Mammary epithelial cell (primary cell): ENCODE measurements at regions of chr1 and their contacts with region 1.

Region 1: DNA sequence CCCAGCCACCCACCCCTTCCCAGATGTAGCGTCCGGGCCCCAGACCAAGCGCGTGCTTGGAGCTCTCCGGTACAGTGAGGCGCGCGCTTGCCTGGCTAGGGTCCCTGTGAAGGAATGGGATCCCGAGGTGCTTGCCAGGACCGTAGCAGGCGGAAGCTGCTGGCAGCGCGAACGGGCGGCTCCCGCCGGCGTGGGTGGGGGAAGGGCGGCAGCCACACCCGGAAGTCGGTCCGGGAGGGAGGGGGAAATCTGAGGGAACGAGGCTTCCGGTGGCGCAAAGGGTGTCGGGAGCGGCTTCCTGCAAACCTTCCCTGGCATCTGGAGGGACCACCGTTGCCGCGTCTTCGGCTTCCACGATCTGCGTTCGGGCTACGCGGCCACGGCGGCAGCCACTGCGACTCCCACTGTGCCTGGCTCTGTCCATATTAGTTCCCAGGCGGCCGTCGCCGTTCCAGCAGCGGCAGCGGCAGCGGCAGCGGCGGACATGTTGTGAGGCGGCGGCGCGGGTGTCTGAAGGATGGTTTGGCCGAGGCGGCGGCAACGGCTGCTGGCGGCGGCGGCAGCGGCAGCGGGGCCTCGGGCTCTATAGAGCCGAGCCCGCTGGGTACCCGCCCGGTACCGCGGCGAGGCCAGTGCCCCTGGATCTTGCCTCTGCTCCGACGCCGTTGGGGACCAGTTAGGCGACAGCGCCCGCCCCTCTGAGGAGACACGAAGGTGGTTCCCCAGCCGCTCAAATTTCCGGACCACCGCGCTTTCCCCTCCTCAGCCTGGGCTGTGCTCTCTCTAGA is at the start of gene DR1:
- DNase-seq: peak; percentile 92
- H3K4me3 ChIP-seq: peak within 1 kb of the TSS; percentile 87 to 97 (median 96)
- H3K27ac ChIP-seq: peak within 1 kb of the TSS; percentile 92
- H3K4me1 ChIP-seq: peaks cover 23% of the 10 kb centered on the region
- H3K27me3 ChIP-seq: no peaks in the 10 kb centered on the region
- CTCF ChIP-seq: no peak
- total RNA-seq, gene DR1: 35.8 to 79.2 TPM

Region 2: DNA sequence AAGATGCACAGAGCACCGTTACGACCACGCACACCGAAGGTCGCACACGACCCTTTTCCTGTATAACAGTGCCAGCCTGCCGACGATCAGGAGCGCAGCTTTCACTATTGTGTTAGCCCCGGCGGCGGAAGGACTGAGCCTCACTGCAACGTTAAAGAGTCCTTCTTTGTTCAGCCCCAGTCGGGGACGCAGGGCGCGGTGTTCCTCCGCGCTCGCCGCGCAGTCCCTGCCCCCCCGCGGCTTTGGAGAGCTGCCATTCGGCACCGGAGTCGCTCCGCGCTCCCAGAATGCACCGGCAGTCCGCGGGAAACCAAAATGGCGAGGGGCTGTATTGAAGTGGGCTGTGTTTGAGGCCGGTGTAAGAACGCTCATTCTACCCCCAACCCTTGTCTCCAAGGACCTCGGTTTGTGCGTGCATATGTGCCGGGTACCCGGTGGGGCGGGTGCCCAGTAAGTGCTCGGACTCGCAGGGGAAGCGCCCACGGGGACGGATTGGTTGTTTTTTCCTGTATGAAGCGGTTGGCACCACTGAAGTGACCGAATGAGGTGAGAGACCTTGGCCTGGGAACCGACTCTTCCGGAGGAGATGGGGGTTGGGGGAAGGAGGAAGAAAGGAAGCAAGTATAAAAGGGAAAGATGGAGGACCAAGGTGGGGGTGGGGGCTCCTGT is 266.7 kb before region 1 on chr1 and contains the start of gene MTF2:
- CTCF ChIA-PET with region 1: no interaction called
- dilution Hi-C with region 1: no loop called
- in situ Hi-C with region 1: no loop called
- intact Hi-C with region 1: loop called (anchors 5 kb)
- DNase-seq: peak; percentile 94
- H3K4me3 ChIP-seq: peak within 1 kb of the TSS; percentile 67 to 99 (median 83)
- H3K27ac ChIP-seq: peak within 1 kb of the TSS; percentile 79
- H3K4me1 ChIP-seq: peaks cover 22% of the 10 kb centered on the region
- H3K27me3 ChIP-seq: no peaks in the 10 kb centered on the region
- CTCF ChIP-seq: no peak
- total RNA-seq, gene MTF2: 23.5 to 27.5 TPM

Region 3: GRCh38 chr1:93179886-93180722 is 165.7 kb before region 1 on chr1 and contains the start of gene TMED5:
- CTCF ChIA-PET with region 1: interaction called, 3 read pairs
- dilution Hi-C with region 1: no loop called
- in situ Hi-C with region 1: no loop called
- intact Hi-C with region 1: loop called (anchors 2 kb)
- DNase-seq: peak; percentile 99
- H3K4me3 ChIP-seq: peak within 1 kb of the TSS; percentile 85 to 100 (median 98)
- H3K27ac ChIP-seq: peak within 1 kb of the TSS; percentile 94
- H3K4me1 ChIP-seq: peaks cover 14% of the 10 kb centered on the region
- H3K27me3 ChIP-seq: no peaks in the 10 kb centered on the region
- CTCF ChIP-seq: peak in 1 of 2 donors; percentile 18
- total RNA-seq, gene TMED5: 50.5 to 61.5 TPM

Region 4: DNA sequence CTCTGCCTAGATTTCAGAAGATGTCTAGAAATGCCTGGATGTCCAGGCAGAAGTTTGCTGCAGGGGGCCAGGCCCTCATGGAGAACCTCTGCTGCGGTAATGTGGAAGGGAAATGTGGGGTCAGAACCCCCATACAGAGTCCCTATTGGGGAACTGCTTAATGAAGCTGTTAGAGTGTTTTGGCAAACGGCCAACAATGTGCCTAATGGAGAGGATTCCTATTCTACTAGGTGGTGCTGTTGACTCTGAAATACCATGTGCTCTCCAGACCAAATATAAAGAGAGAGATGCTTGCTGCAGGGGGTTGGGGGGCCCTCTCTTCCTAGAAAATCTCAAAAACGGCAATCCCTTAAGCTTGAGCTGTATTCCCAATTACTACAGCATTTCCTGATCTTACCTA is 57.3 kb before region 1 on chr1:
- CTCF ChIA-PET with region 1: no interaction called
- dilution Hi-C with region 1: no loop called
- in situ Hi-C with region 1: no loop called
- intact Hi-C with region 1: no loop called
- DNase-seq: no peak
- H3K4me3 ChIP-seq: no peak overlapping the region
- H3K27ac ChIP-seq: no peak overlapping the region
- H3K4me1 ChIP-seq: no peaks in the 10 kb centered on the region
- H3K27me3 ChIP-seq: no peaks in the 10 kb centered on the region
- CTCF ChIP-seq: no peak

Region 5: GRCh38 chr1:93304716-93305138 is 41.1 kb before region 1 on chr1:
- CTCF ChIA-PET with region 1: interaction called, 5 read pairs
- dilution Hi-C with region 1: no loop called
- in situ Hi-C with region 1: loop called in 1 of 2 experiments (anchors 5 kb)
- intact Hi-C with region 1: loop called (anchors 1 kb)
- DNase-seq: peak; percentile 49
- H3K4me3 ChIP-seq: no peak overlapping the region
- H3K27ac ChIP-seq: no peak overlapping the region
- H3K4me1 ChIP-seq: no peaks in the 10 kb centered on the region
- H3K27me3 ChIP-seq: no peaks in the 10 kb centered on the region
- CTCF ChIP-seq: peak; percentile 83 to 93

Region 6: GRCh38 chr1:93324486-93325464 is 21.1 kb before region 1 on chr1:
- CTCF ChIA-PET with region 1: no interaction called
- dilution Hi-C with region 1: no loop called
- in situ Hi-C with region 1: no loop called
- intact Hi-C with region 1: loop called (anchors 1 kb)
- DNase-seq: peak; percentile 88
- H3K4me3 ChIP-seq: peak overlapping the region; percentile 1 to 34 (median 31)
- H3K27ac ChIP-seq: peak overlapping the region; percentile 86
- H3K4me1 ChIP-seq: peaks cover 27% of the 10 kb centered on the region
- H3K27me3 ChIP-seq: no peaks in the 10 kb centered on the region
- CTCF ChIP-seq: no peak

Region 7: DNA sequence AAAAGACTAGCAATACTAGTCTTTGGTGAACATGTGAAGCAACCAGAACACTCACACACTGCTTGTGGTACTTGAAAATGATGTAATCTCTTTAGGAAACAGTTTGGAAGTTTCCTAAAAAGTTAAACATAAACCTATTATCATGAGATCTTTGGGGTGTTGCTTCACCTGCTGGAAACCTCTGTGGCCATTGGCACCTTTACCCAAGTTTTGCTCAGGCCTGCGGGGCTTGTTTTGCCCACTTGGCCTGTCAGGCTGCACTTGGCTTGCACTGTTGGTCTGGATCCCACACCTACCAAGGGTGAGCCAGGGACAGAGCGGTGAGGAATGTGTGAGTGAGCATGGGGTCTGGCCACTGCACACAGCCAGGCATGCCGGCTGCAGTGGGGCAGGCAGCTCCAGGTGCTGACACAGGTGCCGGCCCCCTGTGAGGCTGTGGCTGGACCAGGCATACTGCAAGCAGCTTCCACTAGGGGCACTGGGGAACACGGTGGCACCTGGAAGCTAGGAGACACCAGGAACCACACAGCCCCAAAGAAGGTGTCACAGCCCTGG is 87.7 kb after region 1 on chr1:
- CTCF ChIA-PET with region 1: no interaction called
- dilution Hi-C with region 1: no loop called
- in situ Hi-C with region 1: no loop called
- intact Hi-C with region 1: no loop called
- DNase-seq: peak; percentile 10
- H3K4me3 ChIP-seq: no peak overlapping the region
- H3K27ac ChIP-seq: no peak overlapping the region
- H3K4me1 ChIP-seq: no peaks in the 10 kb centered on the region
- H3K27me3 ChIP-seq: no peaks in the 10 kb centered on the region
- CTCF ChIP-seq: peak; percentile 23 to 62

Region 8: GRCh38 chr1:93542398-93542797 is 196.6 kb after region 1 on chr1:
- CTCF ChIA-PET with region 1: interaction called, 10 read pairs
- dilution Hi-C with region 1: no loop called
- in situ Hi-C with region 1: no loop called
- intact Hi-C with region 1: no loop called
- DNase-seq: no peak
- H3K4me3 ChIP-seq: no peak overlapping the region
- H3K27ac ChIP-seq: no peak overlapping the region
- H3K4me1 ChIP-seq: no peaks in the 10 kb centered on the region
- H3K27me3 ChIP-seq: no peaks in the 10 kb centered on the region
- CTCF ChIP-seq: no peak